ENCODE measurements at regions of chr2 and their contacts with region 1.

Region 1: GRCh38 chr2:226799181-226799975 is at the start of gene IRS1:
- DNase-seq: peak; percentile 65 to 81
- ATAC-seq: peak; percentile 36 to 71 (median 49)
- H3K4me3 ChIP-seq: peak within 1 kb of the TSS; percentile 68 to 95 (median 84)
- H3K27ac ChIP-seq: peak within 1 kb of the TSS; percentile 80 to 97 (median 92)
- H3K4me1 ChIP-seq: peaks cover 3 to 69% (median 48%) of the 10 kb centered on the region in 9 donors
- H3K27me3 ChIP-seq: peaks cover 0 to 58% (median 0%) of the 10 kb centered on the region in 7 donors
- CTCF ChIP-seq: peak in 3 of 9 donors; percentile 52 to 61 (median 59)
- total RNA-seq, gene IRS1: 12.7 to 20.2 (median 15.1) TPM

Region 2: DNA sequence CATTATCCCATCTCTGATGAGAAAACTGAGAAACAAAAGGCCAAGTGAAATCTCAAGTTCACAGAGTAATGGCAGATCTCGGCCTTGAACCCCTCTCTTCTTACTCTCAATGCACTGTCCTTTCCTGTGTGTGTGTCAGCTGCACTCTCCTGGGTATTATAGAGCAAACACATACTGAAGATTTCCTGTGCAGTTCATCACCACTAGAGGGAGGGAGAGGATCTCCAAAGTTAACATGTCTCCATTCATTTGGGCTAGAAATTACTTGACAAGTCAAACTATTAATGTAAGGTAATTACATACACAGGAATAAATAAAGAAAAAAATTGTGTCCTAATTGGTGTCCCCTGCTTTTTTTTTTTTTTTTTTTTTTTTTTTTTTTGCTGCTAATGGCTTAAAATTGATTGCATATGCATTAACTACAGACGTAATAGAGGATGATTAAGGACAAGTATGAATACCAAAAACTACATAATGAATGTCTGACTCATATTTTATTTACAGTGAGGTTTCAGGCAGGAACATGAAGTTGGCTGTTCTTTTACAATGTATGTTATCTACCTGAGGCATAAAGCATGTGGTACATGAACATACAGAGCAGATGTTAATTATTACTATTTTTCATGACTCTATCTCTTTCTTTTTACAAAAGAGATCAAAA is 1130.6 kb before region 1 on chr2:
- intact Hi-C with region 1: loop called in 9 of 10 experiments (anchors 2 to 10 kb)
- DNase-seq: peak in 1 of 2 donors; percentile 6
- ATAC-seq: peak in 3 of 8 donors; percentile 53 to 70 (median 64)
- H3K4me3 ChIP-seq: no peak overlapping the region
- H3K27ac ChIP-seq: no peak overlapping the region
- H3K4me1 ChIP-seq: no peaks in the 10 kb centered on the region
- H3K27me3 ChIP-seq: peaks cover 0 to 11% (median 0%) of the 10 kb centered on the region in 7 donors
- CTCF ChIP-seq: peak in 8 of 9 donors; percentile 26 to 72 (median 64)

Region 3: GRCh38 chr2:226030788-226031646 is 768.4 kb before region 1 on chr2:
- intact Hi-C with region 1: loop called in 2 of 10 experiments (anchors 5 to 10 kb)
- DNase-seq: peak; percentile 57 to 62
- ATAC-seq: peak; percentile 89 to 96 (median 95)
- H3K4me3 ChIP-seq: peak overlapping the region; percentile 39 to 64 (median 61)
- H3K27ac ChIP-seq: peak overlapping the region; percentile 23 to 77 (median 46)
- H3K4me1 ChIP-seq: peaks cover 0 to 19% (median 13%) of the 10 kb centered on the region in 9 donors
- H3K27me3 ChIP-seq: peaks cover 0 to 4% (median 0%) of the 10 kb centered on the region in 7 donors
- CTCF ChIP-seq: no peak

Region 4: GRCh38 chr2:226649871-226650660 is 149.3 kb before region 1 on chr2:
- intact Hi-C with region 1: loop called in 5 of 10 experiments (anchors 5 to 10 kb)
- DNase-seq: peak; percentile 41 to 84
- ATAC-seq: peak; percentile 90 to 98 (median 95)
- H3K4me3 ChIP-seq: peak overlapping the region in 3 of 10 donors; percentile 3 to 24 (median 20)
- H3K27ac ChIP-seq: peak overlapping the region; percentile 41 to 89 (median 74)
- H3K4me1 ChIP-seq: peaks cover 9 to 38% (median 24%) of the 10 kb centered on the region in 9 donors
- H3K27me3 ChIP-seq: peaks cover 0 to 42% (median 6%) of the 10 kb centered on the region in 7 donors
- CTCF ChIP-seq: no peak

Region 5: GRCh38 chr2:226984750-226985582 is 185.6 kb after region 1 on chr2:
- intact Hi-C with region 1: loop called in 7 of 10 experiments (anchors 5 to 10 kb)
- DNase-seq: peak in 1 of 2 donors; percentile 44
- ATAC-seq: peak; percentile 53 to 78 (median 72)
- H3K4me3 ChIP-seq: no peak overlapping the region
- H3K27ac ChIP-seq: peak overlapping the region in 2 of 10 donors; percentile 9 to 34
- H3K4me1 ChIP-seq: peaks cover 0 to 25% (median 6%) of the 10 kb centered on the region in 9 donors
- H3K27me3 ChIP-seq: no peaks in the 10 kb centered on the region
- CTCF ChIP-seq: peak; percentile 57 to 82 (median 70)

Measured in heart right ventricle (tissue), 16 donors.